AG04449 (cell line): ENCODE measurements at regions of chr15 and their contacts with region 1.

Region 1: GRCh38 chr15:40857601-40858341 is 13.9 kb downstream of the SPINT1 start:
- DNase-seq: no peak
- H3K4me3 ChIP-seq: no peak overlapping the region
- CTCF ChIP-seq: peak; percentile 99

Region 2: GRCh38 chr15:40782580-40783227 is 75.1 kb before region 1 on chr15:
- CTCF ChIA-PET with region 1: interaction called, 18 read pairs
- POLR2A ChIA-PET with region 1: no interaction called
- DNase-seq: no peak
- H3K4me3 ChIP-seq: no peak overlapping the region
- CTCF ChIP-seq: peak; percentile 55

Region 3: DNA sequence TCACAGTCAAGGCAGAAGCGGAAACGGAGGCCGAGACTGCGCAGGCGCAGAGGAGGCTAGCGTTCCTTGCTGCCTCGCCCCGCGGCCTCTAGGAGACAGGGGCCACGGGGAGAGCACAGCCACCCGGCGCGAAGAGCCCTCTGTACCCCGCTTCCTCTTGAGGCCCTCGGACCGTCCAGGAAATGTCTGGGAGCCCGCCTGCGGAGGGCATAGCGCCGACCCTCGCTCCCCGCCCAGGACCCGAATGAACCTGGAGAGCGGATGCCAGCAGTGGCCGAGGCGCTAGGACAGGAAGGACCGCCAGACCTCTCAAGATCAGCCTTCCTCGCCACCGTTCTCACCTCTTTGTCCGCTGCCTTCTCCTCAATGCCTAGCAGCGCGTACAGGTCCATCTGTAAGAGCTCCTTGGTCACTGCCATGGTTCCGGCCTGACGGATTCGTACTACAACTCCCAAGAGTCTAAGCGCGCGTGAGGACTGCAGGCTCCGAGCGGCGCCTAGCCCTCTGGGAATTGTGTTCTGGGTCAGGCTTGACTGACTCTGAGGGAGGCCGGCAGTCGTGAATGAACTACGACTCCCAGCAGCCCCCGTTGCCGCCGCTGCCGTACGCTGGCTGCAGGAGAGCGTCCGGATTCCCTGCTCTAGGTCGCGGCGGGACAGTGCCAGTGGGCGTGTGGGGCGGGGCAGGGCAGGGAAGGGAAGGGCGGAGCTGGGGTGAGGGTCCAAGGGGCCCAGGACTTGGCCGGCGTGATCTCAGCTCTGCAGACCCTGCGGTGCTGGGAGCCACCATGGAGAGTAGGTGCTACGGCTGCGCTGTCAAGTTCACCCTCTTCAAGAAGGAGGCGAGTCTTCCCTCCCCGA is 50.5 kb before region 1 on chr15 and contains the starts of genes DNAJC17 and ZFYVE19:
- CTCF ChIA-PET with region 1: interaction called, 16 read pairs
- POLR2A ChIA-PET with region 1: no interaction called
- DNase-seq: peak; percentile 77
- H3K4me3 ChIP-seq: peak within 1 kb of the TSS; percentile 100
- CTCF ChIP-seq: peak; percentile 6

Region 4: DNA sequence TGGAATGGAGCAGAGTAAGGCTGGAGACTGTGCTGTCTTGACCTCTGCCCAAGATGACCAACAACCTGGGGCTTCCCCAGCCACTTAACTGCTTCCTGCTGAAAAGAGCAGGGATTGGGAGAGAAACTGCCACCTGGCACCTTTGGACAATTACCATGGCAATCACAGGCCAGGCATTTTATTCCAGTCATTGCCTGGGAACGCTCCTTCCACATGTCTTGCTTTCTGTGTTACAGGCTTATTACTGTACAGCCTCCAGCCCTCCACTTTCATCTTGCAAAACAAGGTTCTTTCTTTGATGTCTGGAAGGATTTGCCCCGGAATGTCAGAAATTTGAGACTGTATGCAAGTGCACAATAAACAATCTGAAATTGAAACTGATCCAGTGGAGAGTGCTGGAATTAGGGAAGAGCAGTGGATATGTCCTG is 32.1 kb before region 1 on chr15:
- CTCF ChIA-PET with region 1: interaction called, 15 read pairs
- POLR2A ChIA-PET with region 1: no interaction called
- DNase-seq: no peak
- H3K4me3 ChIP-seq: no peak overlapping the region
- CTCF ChIP-seq: no peak

Region 5: GRCh38 chr15:41022487-41023090 is 164.8 kb after region 1 on chr15:
- CTCF ChIA-PET with region 1: interaction called, 13 read pairs
- POLR2A ChIA-PET with region 1: no interaction called
- DNase-seq: peak; percentile 16
- H3K4me3 ChIP-seq: no peak overlapping the region
- CTCF ChIP-seq: peak; percentile 77